PC-9 (cell line): ENCODE measurements at regions of chr16 and their contacts with region 1.

Region 1: DNA sequence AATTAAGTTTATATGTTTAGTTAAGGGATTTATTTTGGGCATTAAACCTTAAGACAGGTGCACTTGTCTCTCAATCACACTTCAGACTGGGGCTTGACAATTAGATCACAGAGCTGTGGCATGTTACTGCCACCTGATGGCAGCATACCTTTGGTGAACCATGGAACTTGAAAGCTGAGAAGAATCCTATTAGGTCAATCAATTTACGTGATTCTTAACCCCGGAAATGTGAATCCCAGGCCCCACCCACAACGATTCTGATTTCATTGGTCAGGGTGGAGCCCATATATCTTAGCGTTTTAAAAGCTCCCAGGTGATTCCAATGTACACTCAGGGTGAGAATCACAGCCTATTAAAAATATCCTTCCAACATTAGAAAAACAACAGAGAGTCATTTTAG is 91.0 kb downstream of the GSG1L start:
- DNase-seq: peak; percentile 44
- H3K4me3 ChIP-seq: no peak overlapping the region
- H3K27ac ChIP-seq: no peak overlapping the region
- H3K4me1 ChIP-seq: 0 out of 2 replicates have a peak, but pooled peaks cover 5% of the 10 kb centered on the region
- H3K27me3 ChIP-seq: peaks cover 33% of the 10 kb centered on the region
- CTCF ChIP-seq: peak; percentile 77

Region 2: DNA sequence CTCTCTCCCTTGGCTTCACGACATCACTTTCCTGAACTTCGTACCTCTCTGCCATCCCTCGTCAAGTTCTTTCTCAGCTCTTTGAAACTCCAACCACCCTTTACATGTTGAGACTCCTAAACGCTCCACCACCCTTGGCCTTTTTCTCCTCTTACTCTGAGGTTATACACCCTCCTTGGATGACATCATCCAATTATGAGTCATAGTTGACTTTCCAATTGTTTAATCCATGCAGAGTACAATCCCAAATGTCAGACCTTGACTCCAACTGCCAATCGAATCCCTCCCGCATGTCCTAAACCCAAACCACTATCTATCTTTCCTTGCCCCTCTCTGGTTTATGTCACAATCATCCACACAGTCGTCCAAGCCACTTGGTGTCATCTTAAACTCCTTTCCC is 924.2 kb before region 1 on chr16:
- CTCF ChIA-PET with region 1: no interaction called
- POLR2A ChIA-PET with region 1: no interaction called
- intact Hi-C with region 1: no loop called
- DNase-seq: no peak
- H3K4me3 ChIP-seq: no peak overlapping the region
- H3K27ac ChIP-seq: no peak overlapping the region
- H3K4me1 ChIP-seq: no peaks in the 10 kb centered on the region
- H3K27me3 ChIP-seq: peaks cover 23% of the 10 kb centered on the region
- CTCF ChIP-seq: no peak

Region 3: DNA sequence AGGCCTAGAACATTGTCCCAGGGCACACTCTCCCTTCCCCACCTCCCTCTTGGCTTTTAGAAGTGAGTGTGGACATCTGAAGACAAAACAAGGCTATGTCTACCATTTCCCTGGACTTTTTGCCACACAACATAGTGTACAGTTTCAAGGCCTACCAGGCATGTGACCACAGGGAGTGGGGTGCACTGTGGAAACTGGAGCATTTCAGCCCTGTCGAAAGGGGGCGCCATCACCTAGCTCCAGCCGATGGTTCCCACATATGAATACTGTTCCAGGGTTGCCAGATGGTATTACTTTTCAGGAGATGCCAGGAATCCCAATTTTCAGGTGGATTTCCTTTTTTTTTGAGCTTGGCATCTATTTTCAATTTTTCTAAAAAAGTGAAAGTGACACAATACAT is 281.9 kb before region 1 on chr16:
- CTCF ChIA-PET with region 1: no interaction called
- POLR2A ChIA-PET with region 1: no interaction called
- intact Hi-C with region 1: loop called (anchors 5 kb)
- DNase-seq: peak in 1 of 2 experiments; percentile 45
- H3K4me3 ChIP-seq: no peak overlapping the region
- H3K27ac ChIP-seq: no peak overlapping the region
- H3K4me1 ChIP-seq: no peaks in the 10 kb centered on the region
- H3K27me3 ChIP-seq: no peaks in the 10 kb centered on the region
- CTCF ChIP-seq: peak; percentile 64

Region 4: GRCh38 chr16:28069971-28070794 is 97.7 kb after region 1 on chr16:
- CTCF ChIA-PET with region 1: interaction called, 7 read pairs
- POLR2A ChIA-PET with region 1: no interaction called
- intact Hi-C with region 1: loop called (anchors 1 kb)
- DNase-seq: no peak
- H3K4me3 ChIP-seq: no peak overlapping the region
- H3K27ac ChIP-seq: no peak overlapping the region
- H3K4me1 ChIP-seq: no peaks in the 10 kb centered on the region
- H3K27me3 ChIP-seq: peaks cover 20% of the 10 kb centered on the region; the same call in 1 of the 2 replicates
- CTCF ChIP-seq: no peak

Region 5: GRCh38 chr16:28211712-28212534 is 239.4 kb after region 1 on chr16 and contains the start of gene XPO6:
- CTCF ChIA-PET with region 1: no interaction called
- POLR2A ChIA-PET with region 1: no interaction called
- intact Hi-C with region 1: loop called (anchors 10 kb)
- DNase-seq: peak; percentile 81 to 99
- H3K4me3 ChIP-seq: peak within 1 kb of the TSS; percentile 89
- H3K27ac ChIP-seq: peak within 1 kb of the TSS; percentile 32; the same call in 1 of the 2 replicates
- H3K4me1 ChIP-seq: peaks cover 25% of the 10 kb centered on the region
- H3K27me3 ChIP-seq: no peaks in the 10 kb centered on the region
- CTCF ChIP-seq: no peak
- total RNA-seq, gene XPO6: 154 and 221 TPM in 2 replicates

Region 6: GRCh38 chr16:28317040-28317880 is 344.8 kb after region 1 on chr16:
- CTCF ChIA-PET with region 1: no interaction called
- POLR2A ChIA-PET with region 1: no interaction called
- intact Hi-C with region 1: loop called (anchors 2 kb)
- DNase-seq: peak; percentile 46 to 67
- H3K4me3 ChIP-seq: no peak overlapping the region
- H3K27ac ChIP-seq: no peak overlapping the region
- H3K4me1 ChIP-seq: no peaks in the 10 kb centered on the region
- H3K27me3 ChIP-seq: no peaks in the 10 kb centered on the region
- CTCF ChIP-seq: peak; percentile 98